H1 (cell line): ENCODE measurements at regions of chr13 and their contacts with region 1.

Region 1: GRCh38 chr13:114339857-114340534 is 25.7 kb downstream of the CHAMP1 start:
- DNase-seq: no peak
- H3K4me3 ChIP-seq: no peak overlapping the region
- H3K27ac ChIP-seq: no peak overlapping the region
- H3K4me1 ChIP-seq: peaks cover 0 to 5% (median 2%) of the 10 kb centered on the region in 4 experiments; a peak in 2 of 7 replicates
- H3K27me3 ChIP-seq: no peaks in the 10 kb centered on the region
- CTCF ChIP-seq: peak; percentile 32 to 54 (median 43)
- EP300 ChIP-seq: no peak
- POLR2A ChIP-seq: no peak
- RAD21 ChIP-seq: peak; percentile 58 to 69

Region 2: DNA sequence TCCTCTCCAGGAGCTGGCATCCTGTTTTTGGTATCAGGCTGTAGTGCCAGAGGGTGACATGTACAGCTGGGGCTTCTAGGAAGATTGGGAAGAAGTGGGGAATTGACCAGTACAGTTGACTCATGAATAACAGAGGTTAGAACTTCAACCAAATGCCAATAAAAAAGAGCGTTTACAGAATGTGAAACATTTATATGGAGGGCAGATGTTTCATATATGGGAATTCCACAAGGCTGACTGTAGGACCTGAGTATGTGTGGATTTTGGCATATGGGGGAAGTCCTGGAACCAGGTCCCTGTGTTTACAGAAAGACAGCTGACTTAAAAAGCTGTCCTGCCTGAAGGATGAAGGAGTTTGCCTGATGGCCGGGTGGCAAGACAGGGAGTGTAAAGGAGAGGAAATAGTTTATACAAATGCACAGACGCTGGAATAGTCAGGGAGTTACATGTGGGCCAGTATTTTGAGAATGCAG is 20.5 kb before region 1 on chr13:
- CTCF ChIA-PET with region 1: interaction called, 17 read pairs
- POLR2A ChIA-PET with region 1: interaction called, 6 read pairs
- DNase-seq: no peak
- H3K4me3 ChIP-seq: no peak overlapping the region
- H3K27ac ChIP-seq: no peak overlapping the region
- H3K4me1 ChIP-seq: 0 out of 7 replicates have a peak, but pooled peaks cover 0 to 3% (median 0%) of the 10 kb centered on the region in 4 experiments
- H3K27me3 ChIP-seq: no peaks in the 10 kb centered on the region
- CTCF ChIP-seq: no peak
- EP300 ChIP-seq: no peak
- POLR2A ChIP-seq: no peak
- RAD21 ChIP-seq: no peak

Region 3: DNA sequence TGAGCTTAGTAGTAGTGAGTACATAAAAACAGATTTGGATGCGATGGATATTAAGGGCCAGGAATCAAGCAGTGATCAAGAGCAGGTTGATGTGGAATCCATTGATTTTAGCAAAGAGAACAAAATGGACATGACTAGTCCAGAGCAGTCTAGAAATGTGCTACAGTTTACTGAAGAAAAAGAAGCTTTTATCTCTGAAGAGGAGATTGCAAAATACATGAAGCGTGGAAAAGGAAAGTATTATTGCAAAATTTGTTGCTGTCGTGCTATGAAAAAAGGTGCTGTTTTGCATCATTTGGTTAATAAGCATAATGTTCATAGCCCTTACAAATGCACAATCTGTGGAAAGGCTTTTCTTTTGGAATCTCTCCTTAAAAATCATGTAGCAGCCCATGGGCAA is 14.3 kb before region 1 on chr13:
- CTCF ChIA-PET with region 1: interaction called, 18 read pairs
- POLR2A ChIA-PET with region 1: interaction called, 9 read pairs
- DNase-seq: no peak
- H3K4me3 ChIP-seq: no peak overlapping the region
- H3K27ac ChIP-seq: no peak overlapping the region
- H3K4me1 ChIP-seq: peaks cover 0 to 6% (median 0%) of the 10 kb centered on the region in 4 experiments; a peak in 3 of 7 replicates
- H3K27me3 ChIP-seq: no peaks in the 10 kb centered on the region
- CTCF ChIP-seq: no peak
- EP300 ChIP-seq: no peak
- POLR2A ChIP-seq: no peak
- RAD21 ChIP-seq: no peak